ENCODE measurements at regions of chr6 and their contacts with region 1.

Region 1: GRCh38 chr6:166627033-166627874 is at the start of gene RPS6KA2:
- DNase-seq: peak; percentile 100
- ATAC-seq: peak; percentile 96
- H3K4me3 Mint-ChIP-seq: peak within 1 kb of the TSS; percentile 71
- H3K27ac Mint-ChIP-seq: peak within 1 kb of the TSS; percentile 77
- H3K4me1 Mint-ChIP-seq: peaks cover 14% of the 10 kb centered on the region
- H3K27me3 Mint-ChIP-seq: peaks cover 22% of the 10 kb centered on the region
- total RNA-seq, gene RPS6KA2: 9.3 to 10.9 TPM

Region 2: DNA sequence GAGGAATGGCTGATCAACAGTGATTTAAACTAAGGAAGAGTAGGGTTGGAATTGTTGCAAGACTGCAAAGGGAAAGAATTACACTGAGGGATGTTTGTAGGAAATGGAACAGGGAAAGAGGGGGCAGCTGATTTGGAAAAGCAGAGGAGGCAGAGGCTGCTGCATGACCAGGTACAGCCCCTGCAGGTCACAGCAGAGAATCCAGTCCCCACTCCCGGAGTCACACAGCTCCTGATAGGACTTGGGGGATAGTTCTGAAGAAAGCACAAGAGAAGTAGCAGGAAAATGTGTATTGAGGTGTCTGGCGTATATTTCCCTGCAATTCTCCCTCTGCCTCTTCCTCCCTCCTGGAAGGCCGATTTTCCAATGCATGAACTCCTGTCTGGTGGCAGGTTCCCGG is 871.7 kb before region 1 on chr6:
- CTCF ChIA-PET with region 1: no interaction called
- POLR2A ChIA-PET with region 1: no interaction called
- intact Hi-C with region 1: no loop called
- DNase-seq: no peak
- ATAC-seq: no peak
- H3K4me3 Mint-ChIP-seq: no peak overlapping the region
- H3K27ac Mint-ChIP-seq: no peak overlapping the region
- H3K4me1 Mint-ChIP-seq: no peaks in the 10 kb centered on the region
- H3K27me3 Mint-ChIP-seq: peaks cover 3% of the 10 kb centered on the region

Region 3: DNA sequence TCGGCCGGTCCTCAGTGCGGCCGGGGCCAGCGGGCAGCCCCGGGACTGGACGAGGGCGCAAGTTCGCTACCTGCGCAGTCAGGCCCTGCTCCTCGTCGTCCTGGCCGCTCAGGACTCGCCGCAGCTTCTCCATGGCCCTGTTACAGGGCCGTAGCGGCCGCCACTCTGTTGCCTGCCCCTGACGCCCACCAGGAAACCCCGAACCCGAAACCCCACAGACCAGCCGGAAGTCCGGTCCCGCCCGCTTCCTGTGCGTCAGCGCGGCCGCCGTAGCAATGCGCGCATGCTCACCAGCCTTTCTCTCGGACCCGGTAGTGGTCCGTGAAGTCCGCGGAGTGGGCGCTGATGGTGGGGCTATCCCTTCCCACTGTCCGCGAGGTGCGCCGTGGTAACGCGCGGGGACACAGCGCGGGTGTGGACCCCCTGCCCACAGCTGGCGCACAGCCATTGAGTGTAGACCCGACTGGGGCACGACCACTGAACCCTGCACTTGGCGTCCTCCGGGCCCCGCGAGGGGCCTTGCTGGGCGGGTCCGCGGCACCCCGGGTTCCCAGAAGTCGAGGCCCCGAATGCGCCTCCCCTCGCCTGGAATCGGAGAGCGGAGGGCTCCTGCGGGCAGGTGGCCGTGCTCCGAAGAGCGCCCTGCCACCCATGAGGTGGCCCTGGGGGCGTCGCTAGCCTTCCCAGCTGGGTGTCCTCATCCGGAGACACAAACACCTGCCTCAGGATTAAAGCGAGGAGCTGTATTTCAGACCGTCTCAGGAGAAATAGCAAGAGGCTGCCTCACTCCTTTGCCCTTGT is 284.7 kb before region 1 on chr6 and contains the start of gene SFT2D1:
- CTCF ChIA-PET with region 1: no interaction called
- POLR2A ChIA-PET with region 1: no interaction called
- intact Hi-C with region 1: loop called in 1 of 2 experiments (anchors 1 kb)
- DNase-seq: peak; percentile 80
- ATAC-seq: peak; percentile 75
- H3K4me3 Mint-ChIP-seq: peak within 1 kb of the TSS; percentile 81
- H3K27ac Mint-ChIP-seq: peak within 1 kb of the TSS; percentile 80
- H3K4me1 Mint-ChIP-seq: peaks cover 14% of the 10 kb centered on the region
- H3K27me3 Mint-ChIP-seq: no peaks in the 10 kb centered on the region
- total RNA-seq, gene SFT2D1: 39.8 to 54.2 TPM

Region 4: DNA sequence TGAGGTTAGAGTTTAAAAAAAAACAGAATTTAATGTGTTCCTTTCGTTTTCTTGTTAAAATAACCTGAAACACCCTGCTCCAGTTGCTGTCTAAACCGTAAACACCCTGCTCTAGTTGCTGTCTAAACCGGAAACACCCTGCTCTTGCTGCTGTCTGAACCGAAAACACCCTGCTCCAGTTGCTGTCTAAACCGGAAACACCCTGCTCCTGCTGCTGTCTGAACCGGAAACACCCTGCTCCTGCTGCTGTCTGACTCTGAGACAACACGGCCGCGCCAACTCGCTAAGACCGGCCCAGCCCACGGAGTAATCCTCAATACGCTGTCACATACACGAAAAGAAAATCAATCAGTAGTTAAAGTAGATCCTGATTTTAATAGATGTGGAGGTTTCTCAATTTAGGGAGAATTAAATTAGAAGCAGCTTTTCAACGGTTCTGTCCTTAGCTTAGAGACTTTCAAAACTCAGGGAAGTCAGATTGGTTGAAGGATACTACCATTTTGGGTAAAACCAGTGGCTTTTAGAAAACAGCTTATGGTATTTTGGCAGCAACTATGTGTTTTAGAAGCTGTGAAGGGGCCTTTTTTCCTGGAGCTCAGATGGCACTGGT is 139.1 kb before region 1 on chr6:
- CTCF ChIA-PET with region 1: no interaction called
- POLR2A ChIA-PET with region 1: no interaction called
- intact Hi-C with region 1: loop called in 1 of 2 experiments (anchors 1 kb)
- DNase-seq: peak; percentile 86
- ATAC-seq: peak; percentile 98
- H3K4me3 Mint-ChIP-seq: peak overlapping the region; percentile 65
- H3K27ac Mint-ChIP-seq: peak overlapping the region; percentile 98
- H3K4me1 Mint-ChIP-seq: peaks cover 19% of the 10 kb centered on the region
- H3K27me3 Mint-ChIP-seq: no peaks in the 10 kb centered on the region

Region 5: DNA sequence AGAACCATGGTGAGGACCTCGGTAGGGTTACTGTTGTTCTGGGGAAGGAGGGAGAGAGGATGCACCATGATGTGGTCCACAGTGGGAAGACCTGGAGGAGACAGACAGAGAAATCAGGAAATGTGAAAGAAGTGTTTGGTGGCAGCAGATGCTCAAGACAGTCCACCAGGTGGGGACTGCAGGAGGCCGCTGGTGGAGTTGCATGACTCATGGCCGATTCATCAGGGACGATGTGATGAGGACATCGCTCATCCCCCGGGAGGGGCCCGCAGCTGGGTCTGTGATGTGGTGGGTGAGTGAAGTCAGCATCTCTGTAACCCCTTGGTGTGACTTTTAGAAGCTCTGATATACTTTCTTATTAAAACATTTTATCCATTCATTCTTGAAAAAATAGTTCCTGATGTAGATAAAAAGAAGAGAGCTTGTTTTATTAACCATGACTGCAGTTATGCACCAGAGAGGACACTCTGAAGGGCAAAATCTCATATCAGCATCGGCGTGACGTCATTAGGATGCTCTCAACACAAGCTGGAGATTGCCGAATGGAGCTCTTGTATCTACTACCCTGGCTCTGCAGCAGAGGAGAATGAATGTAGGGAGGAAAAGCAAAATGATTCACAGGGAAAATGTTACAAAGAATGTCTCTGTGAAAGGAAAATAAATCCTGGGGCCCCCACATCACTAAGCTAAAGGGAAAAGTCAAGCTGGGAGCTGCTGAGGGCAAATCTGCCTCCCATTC is 112.0 kb before region 1 on chr6:
- CTCF ChIA-PET with region 1: interaction called, 5 read pairs
- POLR2A ChIA-PET with region 1: no interaction called
- intact Hi-C with region 1: loop called in 1 of 2 experiments (anchors 1 kb)
- DNase-seq: peak; percentile 82
- ATAC-seq: peak; percentile 95
- H3K4me3 Mint-ChIP-seq: no peak overlapping the region
- H3K27ac Mint-ChIP-seq: no peak overlapping the region
- H3K4me1 Mint-ChIP-seq: peaks cover 15% of the 10 kb centered on the region
- H3K27me3 Mint-ChIP-seq: no peaks in the 10 kb centered on the region

Region 6: GRCh38 chr6:166852451-166852975 is 225.3 kb after region 1 on chr6:
- CTCF ChIA-PET with region 1: no interaction called
- POLR2A ChIA-PET with region 1: no interaction called
- intact Hi-C with region 1: no loop called
- DNase-seq: peak; percentile 38
- ATAC-seq: peak; percentile 26
- H3K4me3 Mint-ChIP-seq: no peak overlapping the region
- H3K27ac Mint-ChIP-seq: no peak overlapping the region
- H3K4me1 Mint-ChIP-seq: peaks cover 5% of the 10 kb centered on the region
- H3K27me3 Mint-ChIP-seq: no peaks in the 10 kb centered on the region

Region 7: DNA sequence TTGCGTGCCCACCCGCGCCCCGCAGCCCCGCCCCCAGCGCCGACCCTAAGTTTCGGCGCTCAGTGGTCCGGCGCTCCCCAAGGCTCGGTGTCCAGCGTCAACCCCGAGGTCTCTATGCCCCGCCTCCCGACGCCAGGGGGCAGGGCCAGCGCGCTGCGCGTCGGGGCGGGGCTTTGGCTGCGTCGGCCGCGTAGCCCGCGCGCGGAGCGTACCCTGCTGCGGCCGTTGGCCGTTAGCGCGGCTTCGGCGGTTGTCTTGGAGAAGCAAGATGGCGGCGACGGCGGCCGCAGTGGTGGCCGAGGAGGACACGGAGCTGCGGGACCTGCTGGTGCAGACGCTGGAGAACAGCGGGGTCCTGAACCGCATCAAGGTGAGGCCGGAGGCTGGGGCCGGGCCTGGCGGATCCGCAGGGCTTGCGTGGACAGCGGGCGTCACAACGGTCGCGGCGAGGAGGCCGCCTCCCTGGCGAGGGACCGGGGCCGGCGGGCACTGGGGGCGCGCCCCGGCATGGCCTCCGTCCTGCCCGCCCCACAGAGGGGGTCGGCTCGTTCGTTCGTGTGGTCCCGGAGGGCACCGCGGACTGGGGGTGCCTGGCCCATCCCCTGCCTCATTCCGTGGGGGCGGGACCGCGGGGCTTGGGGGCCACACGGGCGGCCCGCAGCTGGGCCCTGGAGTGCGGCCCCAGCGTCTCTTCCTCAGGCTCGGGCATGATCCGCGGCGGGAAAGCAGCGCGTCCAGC is 372.1 kb after region 1 on chr6 and contains the start of gene CEP43:
- CTCF ChIA-PET with region 1: no interaction called
- POLR2A ChIA-PET with region 1: no interaction called
- intact Hi-C with region 1: loop called (anchors 1 kb)
- DNase-seq: peak; percentile 91
- ATAC-seq: peak; percentile 96
- H3K4me3 Mint-ChIP-seq: peak within 1 kb of the TSS; percentile 85
- H3K27ac Mint-ChIP-seq: peak within 1 kb of the TSS; percentile 78
- H3K4me1 Mint-ChIP-seq: peaks cover 26% of the 10 kb centered on the region
- H3K27me3 Mint-ChIP-seq: no peaks in the 10 kb centered on the region
- total RNA-seq, gene CEP43: 19.9 to 20.0 TPM